PC-9 (cell line): ENCODE measurements at regions of chr7 and their contacts with region 1.

Region 1: GRCh38 chr7:47786557-47787248 is 161.6 kb downstream of the PKD1L1 start:
- DNase-seq: peak; percentile 99 to 100
- H3K4me3 ChIP-seq: peak overlapping the region; percentile 20
- H3K27ac ChIP-seq: peak overlapping the region; percentile 93
- H3K4me1 ChIP-seq: peaks cover 77% of the 10 kb centered on the region
- H3K27me3 ChIP-seq: no peaks in the 10 kb centered on the region
- CTCF ChIP-seq: no peak

Region 2: GRCh38 chr7:47534322-47535034 is 252.2 kb before region 1 on chr7:
- CTCF ChIA-PET with region 1: no interaction called
- POLR2A ChIA-PET with region 1: interaction called, 10 read pairs
- intact Hi-C with region 1: no loop called
- DNase-seq: peak; percentile 76 to 89
- H3K4me3 ChIP-seq: no peak overlapping the region
- H3K27ac ChIP-seq: peak overlapping the region; percentile 52
- H3K4me1 ChIP-seq: peaks cover 84% of the 10 kb centered on the region
- H3K27me3 ChIP-seq: no peaks in the 10 kb centered on the region
- CTCF ChIP-seq: peak; percentile 62

Region 3: GRCh38 chr7:47605816-47606575 is 180.7 kb before region 1 on chr7:
- CTCF ChIA-PET with region 1: no interaction called
- POLR2A ChIA-PET with region 1: interaction called, 3 read pairs
- intact Hi-C with region 1: loop called (anchors 1 kb)
- DNase-seq: no peak
- H3K4me3 ChIP-seq: no peak overlapping the region
- H3K27ac ChIP-seq: peak overlapping the region; percentile 98
- H3K4me1 ChIP-seq: peaks cover 77% of the 10 kb centered on the region
- H3K27me3 ChIP-seq: no peaks in the 10 kb centered on the region
- CTCF ChIP-seq: no peak

Region 4: GRCh38 chr7:47710201-47710935 is 76.3 kb before region 1 on chr7:
- CTCF ChIA-PET with region 1: interaction called, 4 read pairs
- POLR2A ChIA-PET with region 1: interaction called, 11 read pairs
- intact Hi-C with region 1: no loop called
- DNase-seq: no peak
- H3K4me3 ChIP-seq: no peak overlapping the region
- H3K27ac ChIP-seq: no peak overlapping the region
- H3K4me1 ChIP-seq: no peaks in the 10 kb centered on the region
- H3K27me3 ChIP-seq: no peaks in the 10 kb centered on the region
- CTCF ChIP-seq: no peak

Region 5: DNA sequence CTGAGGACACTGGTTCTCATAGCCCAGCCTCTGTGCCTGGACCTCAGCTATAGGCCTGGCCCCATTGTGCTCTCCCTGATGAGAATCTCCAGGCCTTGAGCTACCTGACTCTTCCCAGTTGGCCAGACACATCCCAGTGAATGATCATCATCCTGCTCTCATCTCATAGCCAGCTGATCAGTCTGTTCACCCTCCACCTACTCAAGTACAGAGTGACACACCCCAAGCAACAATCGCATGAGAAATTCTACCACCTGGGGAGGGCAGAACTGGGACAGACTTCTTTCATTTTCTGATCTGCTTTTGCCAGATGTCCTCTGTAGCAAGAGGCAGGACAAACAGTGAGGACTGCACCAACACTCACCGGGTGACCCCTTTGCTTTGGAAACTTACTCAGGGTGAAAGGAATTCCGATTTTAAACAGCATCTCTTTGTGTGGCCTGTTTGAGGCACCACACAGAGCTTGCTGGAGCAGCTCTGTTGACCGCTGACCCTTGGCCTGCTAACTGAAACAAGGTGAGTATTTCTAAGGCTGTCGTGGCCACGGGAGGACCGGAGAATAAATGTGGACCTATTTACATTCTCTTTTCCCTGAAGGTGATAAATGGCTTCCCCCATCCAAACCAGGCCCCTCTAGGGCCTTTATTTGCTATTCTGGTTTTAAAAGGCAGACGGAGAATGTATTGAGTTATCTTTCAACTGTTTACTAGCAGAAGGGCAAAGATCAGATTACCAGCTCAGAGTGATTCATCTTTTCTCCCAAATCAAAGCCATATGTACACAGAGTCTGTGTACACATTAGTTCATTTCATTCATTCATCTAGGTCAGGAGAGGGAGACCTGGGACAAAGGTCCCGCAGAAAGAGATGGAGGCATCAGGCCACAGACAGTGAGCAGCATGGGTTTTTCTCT is 23.4 kb before region 1 on chr7:
- CTCF ChIA-PET with region 1: interaction called, 7 read pairs
- POLR2A ChIA-PET with region 1: interaction called, 10 read pairs
- intact Hi-C with region 1: loop called (anchors 1 kb)
- DNase-seq: peak; percentile 82 to 100
- H3K4me3 ChIP-seq: peak overlapping the region; percentile 5; the same call in 1 of the 2 replicates
- H3K27ac ChIP-seq: peak overlapping the region; percentile 95
- H3K4me1 ChIP-seq: peaks cover 69% of the 10 kb centered on the region
- H3K27me3 ChIP-seq: no peaks in the 10 kb centered on the region
- CTCF ChIP-seq: no peak